Thyroid gland (tissue), 4 donors: ENCODE measurements at regions of chr12 and their contacts with region 1.

Region 1: DNA sequence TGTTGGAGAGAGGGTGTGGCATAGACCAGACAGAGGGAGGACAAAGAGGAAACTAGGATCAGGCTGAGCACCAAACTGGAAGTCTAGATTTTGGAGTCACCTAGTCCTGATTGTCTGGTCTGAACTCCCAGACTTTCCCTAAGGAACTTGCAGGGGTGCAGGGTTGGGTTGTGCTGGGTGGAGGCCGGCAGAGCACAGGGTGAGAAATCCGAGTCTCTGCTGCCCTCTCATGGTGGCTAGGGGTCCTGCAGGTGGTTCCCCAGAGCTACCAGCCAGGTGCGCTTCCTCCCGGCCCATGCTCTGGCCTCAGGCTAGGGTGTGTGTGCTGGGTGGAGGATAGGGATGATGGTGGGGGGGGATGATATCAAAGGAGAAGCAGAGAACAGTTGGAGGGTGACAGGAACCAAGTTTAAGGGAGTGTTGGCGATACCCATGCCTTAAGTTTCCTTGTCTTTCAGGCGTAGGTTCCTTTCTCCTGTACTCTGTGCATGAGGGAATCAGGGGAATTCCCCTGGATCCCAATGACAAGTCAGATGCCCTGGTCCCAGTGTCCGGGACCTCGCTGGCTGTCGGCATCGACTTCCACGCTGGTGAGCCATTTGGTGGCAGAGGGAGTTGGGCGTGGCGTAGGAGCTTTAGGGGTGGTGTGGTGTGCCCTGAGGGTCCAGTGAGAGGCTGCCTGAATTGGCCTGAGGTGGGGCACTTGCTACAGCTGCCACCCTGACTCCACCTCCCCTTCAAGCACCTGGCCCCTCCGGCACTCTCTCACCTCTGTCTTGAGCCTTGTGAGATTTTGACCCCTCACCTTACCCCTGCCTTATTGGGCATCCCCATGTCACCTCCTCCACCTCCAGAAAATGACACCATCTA is 33.4 kb upstream of the NXPH4 start:
- DNase-seq: peak; percentile 74 to 78
- H3K4me3 ChIP-seq: no peak overlapping the region
- H3K27ac ChIP-seq: no peak overlapping the region
- H3K4me1 ChIP-seq: no peaks in the 10 kb centered on the region
- H3K27me3 ChIP-seq: no peaks in the 10 kb centered on the region
- CTCF ChIP-seq: peak; percentile 60 to 92 (median 84)
- POLR2A ChIP-seq: no peak

Region 2: GRCh38 chr12:57078519-57079404 is 104.4 kb before region 1 on chr12 and contains the start of gene NEMP1:
- intact Hi-C with region 1: loop called (anchors 5 kb)
- DNase-seq: peak; percentile 98 to 99
- H3K4me3 ChIP-seq: peak within 1 kb of the TSS; percentile 30 to 73 (median 47)
- H3K27ac ChIP-seq: peak within 1 kb of the TSS; percentile 85 to 91 (median 87)
- H3K4me1 ChIP-seq: peaks cover 10 to 11% of the 10 kb centered on the region in 2 donors
- H3K27me3 ChIP-seq: no peaks in the 10 kb centered on the region
- CTCF ChIP-seq: no peak
- POLR2A ChIP-seq: peak in 1 of 2 donors; percentile 67
- total RNA-seq, gene NEMP1: 5.6 to 10.9 (median 9.2) TPM

Region 3: GRCh38 chr12:57124259-57124877 is 58.8 kb before region 1 on chr12:
- intact Hi-C with region 1: loop called (anchors 2 kb)
- DNase-seq: peak; percentile 69 to 72
- H3K4me3 ChIP-seq: no peak overlapping the region
- H3K27ac ChIP-seq: no peak overlapping the region
- H3K4me1 ChIP-seq: peaks cover 10 to 16% of the 10 kb centered on the region in 2 donors
- H3K27me3 ChIP-seq: no peaks in the 10 kb centered on the region
- CTCF ChIP-seq: peak; percentile 83 to 98 (median 88)
- POLR2A ChIP-seq: no peak